Common myeloid progenitor, CD34-positive (primary cell): ENCODE measurements at regions of chr17 and their contacts with region 1.

Region 1: DNA sequence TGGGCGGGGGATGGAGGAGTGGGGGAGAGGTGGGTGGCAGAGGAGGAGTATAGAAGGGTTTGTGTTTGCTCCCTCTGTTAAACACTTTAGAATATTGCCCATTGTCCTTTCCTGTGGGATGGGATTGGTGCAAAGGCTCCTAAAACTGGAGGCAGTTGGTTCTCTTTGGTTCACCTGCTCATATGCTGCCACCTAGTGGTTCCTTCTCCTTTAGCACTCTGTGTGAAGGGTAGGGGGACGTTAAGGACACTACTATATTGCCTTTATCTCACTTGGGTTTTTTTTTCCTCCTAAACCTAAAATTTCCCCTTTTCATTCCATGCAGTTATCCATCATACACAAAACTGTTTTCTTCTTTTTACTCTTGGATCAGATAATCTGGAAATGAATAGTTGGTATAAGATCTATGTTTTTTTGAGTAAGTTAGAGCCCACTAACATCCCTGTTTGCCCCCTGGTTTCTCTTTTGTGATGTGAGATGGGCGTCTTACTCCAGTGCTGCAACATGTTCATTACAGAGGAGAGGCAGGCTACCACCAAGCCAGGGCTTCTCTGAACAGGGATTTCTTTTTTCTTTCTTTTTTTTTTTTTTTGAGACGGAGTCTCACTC is 23.8 kb downstream of the SNX11 start:
- DNase-seq: peak; percentile 61 to 77 (median 65)
- H3K4me3 ChIP-seq: no peak overlapping the region
- H3K27ac ChIP-seq: no peak overlapping the region
- H3K4me1 ChIP-seq: no peaks in the 10 kb centered on the region
- H3K27me3 ChIP-seq: no peaks in the 10 kb centered on the region

Region 2: GRCh38 chr17:48011405-48012150 is 119.7 kb before region 1 on chr17:
- CTCF ChIA-PET with region 1: no interaction called
- POLR2A ChIA-PET with region 1: no interaction called
- DNase-seq: peak; percentile 40 to 65 (median 58)
- H3K4me3 ChIP-seq: peak overlapping the region; percentile 9 to 75 (median 55)
- H3K27ac ChIP-seq: no peak overlapping the region
- H3K4me1 ChIP-seq: peaks cover 0 to 38% (median 16%) of the 10 kb centered on the region in 4 experiments
- H3K27me3 ChIP-seq: peaks cover 0 to 35% (median 10%) of the 10 kb centered on the region in 5 experiments

Region 3: GRCh38 chr17:48100160-48100559 is 31.2 kb before region 1 on chr17:
- CTCF ChIA-PET with region 1: interaction called, 11 read pairs
- POLR2A ChIA-PET with region 1: interaction called, 3 read pairs
- DNase-seq: no peak
- H3K4me3 ChIP-seq: peak overlapping the region in 6 of 7 experiments; percentile 67 to 86 (median 78)
- H3K27ac ChIP-seq: peak overlapping the region in 1 of 2 experiments; percentile 43
- H3K4me1 ChIP-seq: peaks cover 9 to 27% (median 23%) of the 10 kb centered on the region in 4 experiments
- H3K27me3 ChIP-seq: no peaks in the 10 kb centered on the region

Region 4: DNA sequence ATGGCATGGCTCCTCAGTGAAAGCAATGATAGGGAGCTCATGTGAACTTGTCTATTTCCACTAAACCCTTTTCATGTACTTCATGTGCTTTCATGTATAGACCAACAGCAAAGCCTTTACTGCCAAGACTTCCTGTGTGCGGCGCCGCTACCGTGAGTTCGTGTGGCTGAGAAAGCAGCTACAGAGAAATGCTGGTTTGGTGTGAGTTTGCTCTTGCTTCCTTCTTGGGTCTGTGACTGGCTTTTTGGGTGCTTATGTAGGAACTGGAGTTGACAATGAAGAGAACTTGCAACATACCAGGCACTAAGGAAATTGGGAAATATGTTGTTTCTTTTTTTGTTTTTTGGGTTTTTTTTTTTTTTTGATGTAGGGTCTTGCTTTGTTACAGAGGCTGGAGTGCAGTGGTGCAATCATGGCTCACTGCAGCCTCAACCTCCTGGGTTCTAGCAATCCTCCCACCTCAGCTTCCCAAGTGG is 18.1 kb before region 1 on chr17:
- CTCF ChIA-PET with region 1: interaction called, 11 read pairs
- POLR2A ChIA-PET with region 1: no interaction called
- DNase-seq: peak in 2 of 3 donors; percentile 33 to 41
- H3K4me3 ChIP-seq: no peak overlapping the region
- H3K27ac ChIP-seq: peak overlapping the region in 1 of 2 experiments; percentile 22
- H3K4me1 ChIP-seq: peaks cover 5 to 27% (median 12%) of the 10 kb centered on the region in 4 experiments
- H3K27me3 ChIP-seq: no peaks in the 10 kb centered on the region